IMR-90 (cell line): ENCODE measurements at regions of chr2 and their contacts with region 1.

Region 1: DNA sequence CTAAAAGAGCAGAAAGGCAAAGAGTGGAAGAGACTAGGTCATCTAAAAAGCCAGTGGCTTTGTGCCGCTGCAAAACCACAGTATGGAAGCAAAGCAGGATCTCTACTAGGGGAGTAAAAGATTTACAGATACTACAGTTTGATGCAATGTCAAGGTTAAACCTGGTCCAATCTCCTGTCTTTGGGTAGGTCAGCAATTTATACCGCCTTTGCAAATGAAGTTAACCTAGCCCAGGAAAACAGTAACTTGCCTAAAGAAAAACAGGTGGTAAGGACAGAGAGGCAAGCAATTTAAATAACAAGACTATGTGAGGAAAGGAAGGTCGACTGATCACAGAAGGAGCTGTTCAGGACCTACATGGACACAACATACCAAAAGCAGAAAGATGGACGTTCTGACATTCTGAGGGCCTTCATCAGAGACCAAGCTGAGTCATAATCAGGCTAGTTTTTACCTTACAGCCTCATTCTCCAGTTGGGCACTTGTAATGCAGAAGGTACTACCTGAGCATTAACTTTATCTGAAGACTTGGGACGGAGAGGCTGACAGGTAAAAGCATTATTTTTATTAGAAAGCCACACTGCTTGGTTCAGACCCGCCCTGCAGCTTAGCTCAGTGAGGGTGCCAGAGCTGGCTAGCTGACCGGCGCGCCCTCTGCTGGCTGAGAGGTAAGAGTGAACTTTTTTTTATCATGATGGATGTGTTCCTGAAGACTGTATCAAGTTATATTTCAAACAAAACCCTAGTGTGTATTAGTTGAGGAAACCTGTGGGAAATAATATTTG is 15.9 kb downstream of the CDKL4 start:
- DNase-seq: peak; percentile 62
- ATAC-seq: peak; percentile 77
- H3K4me3 ChIP-seq: no peak overlapping the region
- H3K27ac ChIP-seq: no peak overlapping the region
- H3K4me1 ChIP-seq: 0 out of 2 replicates have a peak, but pooled peaks cover 1% of the 10 kb centered on the region
- H3K27me3 ChIP-seq: no peaks in the 10 kb centered on the region
- CTCF ChIP-seq: peak; percentile 84
- POLR2A ChIP-seq: no peak
- RAD21 ChIP-seq: peak; percentile 77

Region 2: DNA sequence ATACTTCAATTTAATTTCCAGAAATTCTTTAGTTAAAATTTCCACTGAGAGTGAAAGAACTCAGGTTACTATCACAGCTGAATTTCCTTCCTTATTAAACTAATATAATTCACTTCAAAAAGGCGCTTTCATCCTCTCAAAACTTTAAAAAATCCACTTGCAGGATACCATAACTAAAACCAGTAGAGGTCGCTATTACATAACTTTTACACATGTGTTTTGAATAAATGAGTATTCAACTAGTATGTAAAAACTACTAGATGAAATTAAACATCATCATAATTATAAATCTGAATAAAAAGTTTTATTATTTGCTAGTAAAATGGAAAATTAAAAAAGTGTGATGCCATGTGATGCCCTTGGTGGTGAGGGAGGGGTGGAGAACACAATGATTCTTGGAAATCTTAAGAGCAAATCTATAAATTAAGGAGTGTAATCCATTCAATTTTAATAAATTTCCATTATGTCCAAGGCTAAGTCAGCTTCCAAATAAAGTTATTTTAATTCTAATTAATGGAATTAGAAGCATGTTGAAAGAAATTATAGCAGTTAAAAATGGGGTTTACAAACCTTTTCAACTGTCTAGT is 168.4 kb before region 1 on chr2:
- CTCF ChIA-PET with region 1: interaction called, 14 read pairs
- POLR2A ChIA-PET with region 1: no interaction called
- dilution Hi-C with region 1: no loop called
- in situ Hi-C with region 1: loop called (anchors 5 kb)
- intact Hi-C with region 1: loop called (anchors 1 kb)
- DNase-seq: peak; percentile 69
- ATAC-seq: peak; percentile 59
- H3K4me3 ChIP-seq: no peak overlapping the region
- H3K27ac ChIP-seq: no peak overlapping the region
- H3K4me1 ChIP-seq: no peaks in the 10 kb centered on the region; the same call in 1 of the 2 replicates
- H3K27me3 ChIP-seq: no peaks in the 10 kb centered on the region
- CTCF ChIP-seq: peak; percentile 76
- POLR2A ChIP-seq: no peak
- RAD21 ChIP-seq: peak; percentile 76

Region 3: DNA sequence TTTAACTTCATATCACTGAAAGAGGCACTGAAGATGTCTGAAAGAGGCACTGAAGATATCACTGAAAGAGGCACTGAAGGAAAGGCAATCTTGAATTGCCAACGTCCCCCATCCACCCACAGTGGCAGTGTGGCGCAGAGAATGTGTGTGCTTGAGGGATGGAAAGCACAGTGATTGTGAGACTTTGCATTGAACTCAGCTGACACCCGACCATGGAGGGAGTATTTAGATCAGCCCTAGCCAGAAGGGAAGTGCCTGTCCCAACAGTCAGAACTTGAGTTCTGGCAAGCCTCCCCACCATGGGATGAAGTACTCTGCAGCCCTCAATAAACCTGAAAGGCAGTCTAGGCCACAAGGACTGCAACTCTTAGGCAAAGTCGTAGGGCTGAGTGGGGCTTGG is 175.5 kb after region 1 on chr2:
- CTCF ChIA-PET with region 1: no interaction called
- POLR2A ChIA-PET with region 1: no interaction called
- dilution Hi-C with region 1: no loop called
- in situ Hi-C with region 1: no loop called
- intact Hi-C with region 1: no loop called
- DNase-seq: peak; percentile 23
- ATAC-seq: no peak
- H3K4me3 ChIP-seq: no peak overlapping the region
- H3K27ac ChIP-seq: 0 out of 2 replicates have a peak overlapping the region, but pooled peaks have one; percentile 7
- H3K4me1 ChIP-seq: peaks cover 33% of the 10 kb centered on the region
- H3K27me3 ChIP-seq: no peaks in the 10 kb centered on the region
- CTCF ChIP-seq: no peak
- POLR2A ChIP-seq: no peak
- RAD21 ChIP-seq: no peak